ENCODE measurements at regions of chr1 and their contacts with region 1.

Region 1: GRCh38 chr1:18597160-18598042 is 33.2 kb upstream of the PAX7 start:
- DNase-seq: peak; percentile 53
- H3K4me3 Mint-ChIP-seq: no peak overlapping the region
- H3K27ac Mint-ChIP-seq: no peak overlapping the region
- H3K4me1 Mint-ChIP-seq: no peaks in the 10 kb centered on the region
- H3K27me3 Mint-ChIP-seq: peaks cover 22% of the 10 kb centered on the region
- CTCF ChIP-seq: peak; percentile 96

Region 2: GRCh38 chr1:18572022-18572880 is 25.1 kb before region 1 on chr1:
- CTCF ChIA-PET with region 1: interaction called, 10 read pairs
- POLR2A ChIA-PET with region 1: no interaction called
- intact Hi-C with region 1: no loop called
- DNase-seq: no peak
- H3K4me3 Mint-ChIP-seq: no peak overlapping the region
- H3K27ac Mint-ChIP-seq: no peak overlapping the region
- H3K4me1 Mint-ChIP-seq: no peaks in the 10 kb centered on the region
- H3K27me3 Mint-ChIP-seq: peaks cover 41% of the 10 kb centered on the region
- CTCF ChIP-seq: no peak

Region 3: DNA sequence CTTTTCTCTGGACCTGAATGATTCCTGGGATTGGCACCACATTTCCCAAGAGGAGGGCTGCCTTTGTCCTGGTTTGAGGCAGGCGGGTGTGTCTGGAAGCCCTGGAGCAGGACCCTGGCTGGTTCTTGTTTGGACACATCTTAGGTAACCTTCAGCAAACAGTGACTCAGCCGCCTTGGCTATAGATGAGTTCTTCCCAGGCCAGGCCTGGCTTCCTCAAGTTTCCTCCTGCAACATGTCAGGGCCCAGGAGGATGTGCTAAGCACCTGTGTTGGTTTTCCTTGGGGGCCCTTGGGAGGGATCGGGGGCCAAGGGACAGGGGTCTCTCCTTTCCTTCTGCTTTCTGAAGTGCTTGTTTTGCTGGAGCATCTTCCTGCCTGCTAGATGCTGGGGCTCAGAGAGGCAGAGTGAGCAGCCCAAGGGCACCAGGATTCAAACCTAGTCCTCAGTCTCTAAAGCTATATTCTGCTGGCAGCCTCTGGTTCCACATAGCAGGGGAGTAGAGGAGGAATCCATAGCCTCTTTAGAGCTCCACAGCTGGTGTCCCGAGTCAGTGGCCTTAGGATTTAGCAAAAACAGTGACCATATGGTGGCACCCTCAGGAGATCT is 71.5 kb after region 1 on chr1:
- CTCF ChIA-PET with region 1: interaction called, 13 read pairs
- POLR2A ChIA-PET with region 1: no interaction called
- intact Hi-C with region 1: no loop called
- DNase-seq: peak; percentile 96
- H3K4me3 Mint-ChIP-seq: no peak overlapping the region
- H3K27ac Mint-ChIP-seq: peak overlapping the region; percentile 27
- H3K4me1 Mint-ChIP-seq: peaks cover 37% of the 10 kb centered on the region
- H3K27me3 Mint-ChIP-seq: no peaks in the 10 kb centered on the region
- CTCF ChIP-seq: no peak

Region 4: GRCh38 chr1:18681423-18681835 is 84.0 kb after region 1 on chr1:
- CTCF ChIA-PET with region 1: interaction called, 122 read pairs
- POLR2A ChIA-PET with region 1: no interaction called
- intact Hi-C with region 1: loop called (anchors 1 kb)
- DNase-seq: peak; percentile 83
- H3K4me3 Mint-ChIP-seq: no peak overlapping the region
- H3K27ac Mint-ChIP-seq: peak overlapping the region; percentile 7
- H3K4me1 Mint-ChIP-seq: peaks cover 6% of the 10 kb centered on the region
- H3K27me3 Mint-ChIP-seq: no peaks in the 10 kb centered on the region
- CTCF ChIP-seq: peak; percentile 79

Region 5: GRCh38 chr1:18734461-18735223 is 137.2 kb after region 1 on chr1:
- CTCF ChIA-PET with region 1: no interaction called
- POLR2A ChIA-PET with region 1: no interaction called
- intact Hi-C with region 1: no loop called
- DNase-seq: no peak
- H3K4me3 Mint-ChIP-seq: no peak overlapping the region
- H3K27ac Mint-ChIP-seq: no peak overlapping the region
- H3K4me1 Mint-ChIP-seq: no peaks in the 10 kb centered on the region
- H3K27me3 Mint-ChIP-seq: peaks cover 32% of the 10 kb centered on the region
- CTCF ChIP-seq: no peak

Region 6: GRCh38 chr1:18805150-18805879 is 207.9 kb after region 1 on chr1:
- CTCF ChIA-PET with region 1: interaction called, 15 read pairs
- POLR2A ChIA-PET with region 1: no interaction called
- intact Hi-C with region 1: no loop called
- DNase-seq: no peak
- H3K4me3 Mint-ChIP-seq: no peak overlapping the region
- H3K27ac Mint-ChIP-seq: no peak overlapping the region
- H3K4me1 Mint-ChIP-seq: no peaks in the 10 kb centered on the region
- H3K27me3 Mint-ChIP-seq: peaks cover 8% of the 10 kb centered on the region
- CTCF ChIP-seq: no peak

Region 7: DNA sequence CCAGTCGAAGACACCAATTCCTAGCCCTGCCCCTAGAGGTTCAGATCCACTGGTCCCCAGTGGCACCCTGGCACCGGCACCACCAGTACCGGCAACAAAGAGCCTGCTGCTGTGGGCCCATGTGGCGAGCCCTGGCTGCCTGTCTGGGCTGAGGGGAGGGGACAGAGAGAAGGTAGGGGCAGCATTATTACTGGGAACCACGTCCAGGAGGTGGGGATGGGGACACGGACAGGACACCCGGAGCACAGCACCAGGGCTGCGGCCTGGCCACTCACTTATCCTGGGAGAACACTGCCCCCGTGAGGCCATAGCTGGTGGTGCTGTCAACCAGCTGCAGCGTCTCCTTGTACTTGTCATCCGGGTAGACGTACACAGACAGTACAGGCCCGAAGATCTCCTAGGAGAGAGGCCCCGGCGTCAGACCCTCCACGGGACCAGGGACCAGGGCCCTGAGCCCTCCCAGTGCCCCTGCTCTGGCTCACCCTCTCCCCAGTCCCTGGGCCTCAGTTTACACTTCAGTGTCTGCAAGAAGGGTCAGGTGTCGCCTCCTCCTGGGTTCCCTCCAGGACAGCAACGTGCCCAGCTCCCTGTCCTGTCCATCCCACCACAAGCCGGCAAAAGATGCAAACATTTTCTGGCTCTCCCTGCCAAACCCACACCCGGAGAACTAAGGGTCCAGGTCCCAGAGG is 277.9 kb after region 1 on chr1:
- CTCF ChIA-PET with region 1: interaction called, 40 read pairs
- POLR2A ChIA-PET with region 1: no interaction called
- intact Hi-C with region 1: loop called (anchors 1 kb)
- DNase-seq: peak; percentile 76
- H3K4me3 Mint-ChIP-seq: no peak overlapping the region
- H3K27ac Mint-ChIP-seq: no peak overlapping the region
- H3K4me1 Mint-ChIP-seq: no peaks in the 10 kb centered on the region
- H3K27me3 Mint-ChIP-seq: no peaks in the 10 kb centered on the region
- CTCF ChIP-seq: peak; percentile 81